Naive thymus-derived CD4-positive, alpha-beta T cell (primary cell): ENCODE measurements at regions of chr4 and their contacts with region 1.

Region 1: GRCh38 chr4:55948726-55949474 is at the start of gene CEP135:
- DNase-seq: peak; percentile 84 to 94 (median 90)
- ATAC-seq: peak; percentile 88
- H3K4me3 ChIP-seq: peak within 1 kb of the TSS; percentile 88
- H3K4me3 Mint-ChIP-seq: peak within 1 kb of the TSS; percentile 86 to 96 (median 92)
- H3K27ac ChIP-seq: peak within 1 kb of the TSS; percentile 71
- H3K27ac Mint-ChIP-seq: peak within 1 kb of the TSS; percentile 90 to 98 (median 94)
- H3K4me1 ChIP-seq: peaks cover 14 to 15% of the 10 kb centered on the region in 2 donors
- H3K4me1 Mint-ChIP-seq: peaks cover 30 to 69% (median 51%) of the 10 kb centered on the region in 7 donors
- H3K27me3 ChIP-seq: no peaks in the 10 kb centered on the region
- H3K27me3 Mint-ChIP-seq: no peaks in the 10 kb centered on the region
- total RNA-seq, gene CEP135: 20.6 to 38.8 (median 24.6) TPM

Region 2: DNA sequence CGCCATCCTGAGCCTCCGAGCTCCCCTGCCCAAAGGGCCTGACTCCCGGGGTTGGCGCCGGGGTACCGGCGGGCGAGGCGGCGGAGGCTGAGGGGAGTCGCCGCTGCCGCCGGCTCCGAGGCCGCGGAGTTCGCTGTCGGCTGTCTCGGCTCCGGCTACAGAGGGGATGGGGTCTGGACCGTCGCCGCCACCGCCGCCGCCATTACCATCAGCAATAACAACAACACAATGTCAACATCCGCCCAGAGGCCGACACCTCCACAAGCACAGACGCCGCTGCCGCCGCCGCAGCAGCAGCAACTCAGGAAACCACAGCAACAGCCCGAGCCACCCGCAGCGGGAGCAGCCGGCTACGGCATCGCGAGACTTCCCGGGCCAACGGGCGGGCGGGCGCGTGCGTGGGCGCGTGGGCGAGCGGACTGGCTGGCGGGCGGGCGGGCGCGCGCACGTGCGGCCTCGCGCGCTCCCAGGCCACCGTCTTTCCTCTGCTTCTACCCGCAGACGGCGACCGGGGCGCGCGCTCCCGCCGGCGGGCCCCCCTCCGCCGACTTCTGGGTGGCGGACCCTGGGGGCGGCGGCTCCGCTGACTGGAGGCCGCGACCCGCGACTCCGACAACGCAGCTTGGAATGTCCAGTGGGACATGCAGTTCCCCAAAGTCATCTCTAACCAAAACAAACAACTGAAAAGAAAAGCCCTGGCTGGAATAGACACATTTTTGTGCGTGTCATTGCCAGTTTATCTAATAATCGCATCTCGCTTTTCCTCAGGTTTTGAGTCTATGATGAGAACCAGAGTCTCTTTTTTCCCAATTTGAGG is 1884.4 kb before region 1 on chr4 and contains the start of gene CHIC2:
- CTCF ChIA-PET with region 1: no interaction called
- POLR2A ChIA-PET with region 1: no interaction called
- intact Hi-C with region 1: loop called (anchors 1 to 5 kb)
- DNase-seq: peak; percentile 95 to 99 (median 98)
- ATAC-seq: peak; percentile 94
- H3K4me3 ChIP-seq: peak within 1 kb of the TSS; percentile 77
- H3K4me3 Mint-ChIP-seq: peak within 1 kb of the TSS; percentile 94 to 100 (median 97)
- H3K27ac ChIP-seq: peak within 1 kb of the TSS; percentile 100
- H3K27ac Mint-ChIP-seq: peak within 1 kb of the TSS; percentile 95 to 99 (median 98)
- H3K4me1 ChIP-seq: peaks cover 8 to 32% of the 10 kb centered on the region in 2 donors
- H3K4me1 Mint-ChIP-seq: peaks cover 39 to 59% (median 44%) of the 10 kb centered on the region in 7 donors
- H3K27me3 ChIP-seq: no peaks in the 10 kb centered on the region
- H3K27me3 Mint-ChIP-seq: peaks cover 0 to 2% (median 0%) of the 10 kb centered on the region in 5 donors
- total RNA-seq, gene CHIC2: 22.4 to 55.7 (median 40.7) TPM

Region 3: DNA sequence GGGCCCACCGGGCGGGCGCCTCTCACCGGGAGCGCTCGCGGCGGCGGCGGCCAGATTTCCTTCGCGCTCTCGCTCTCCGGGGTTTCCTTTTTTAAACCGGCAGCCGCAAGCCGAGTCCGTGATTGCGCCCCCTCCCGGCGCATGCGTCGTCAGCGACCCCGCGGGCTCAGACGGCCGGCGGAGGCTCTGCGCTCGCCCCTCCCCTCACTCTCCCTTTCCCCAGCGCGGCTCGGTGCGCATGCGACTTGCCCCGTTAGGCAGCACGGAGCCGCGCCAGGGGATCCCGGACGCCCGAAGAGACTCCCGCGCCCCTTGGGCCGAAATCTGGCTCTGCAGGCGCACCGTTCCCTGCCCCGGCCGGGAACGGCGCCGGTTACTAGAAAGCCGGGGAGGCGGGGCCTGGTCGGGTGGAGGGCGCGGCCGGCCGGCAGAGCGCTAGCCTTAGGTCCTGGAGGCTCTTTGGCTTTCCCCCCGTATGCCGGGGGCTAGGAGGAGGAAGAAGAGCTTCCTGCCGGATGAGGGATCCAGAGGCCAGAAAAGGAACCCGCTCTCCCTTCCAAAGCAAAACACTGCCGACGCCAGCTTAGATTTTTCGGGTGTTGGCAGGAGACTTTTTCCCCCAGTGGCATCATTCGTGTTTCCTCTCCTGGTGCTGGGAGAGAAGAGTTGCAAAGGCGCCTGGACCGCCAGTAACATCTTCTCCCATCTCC is 402.0 kb before region 1 on chr4 and contains the start of gene CLOCK:
- CTCF ChIA-PET with region 1: interaction called, 5 read pairs
- POLR2A ChIA-PET with region 1: interaction called, 3 read pairs
- intact Hi-C with region 1: loop called (anchors 1 to 2 kb)
- DNase-seq: peak; percentile 79 to 87 (median 83)
- ATAC-seq: peak; percentile 82
- H3K4me3 ChIP-seq: peak within 1 kb of the TSS; percentile 82
- H3K4me3 Mint-ChIP-seq: peak within 1 kb of the TSS; percentile 88 to 96 (median 94)
- H3K27ac ChIP-seq: peak within 1 kb of the TSS; percentile 84
- H3K27ac Mint-ChIP-seq: peak within 1 kb of the TSS; percentile 87 to 92 (median 90)
- H3K4me1 ChIP-seq: peaks cover 5 to 8% of the 10 kb centered on the region in 2 donors
- H3K4me1 Mint-ChIP-seq: peaks cover 21 to 57% (median 40%) of the 10 kb centered on the region in 7 donors
- H3K27me3 ChIP-seq: no peaks in the 10 kb centered on the region
- H3K27me3 Mint-ChIP-seq: peaks cover 0 to 29% (median 0%) of the 10 kb centered on the region in 5 donors
- total RNA-seq, gene CLOCK: 7.9 to 12.6 (median 8.9) TPM

Region 4: GRCh38 chr4:55906999-55907398 is 41.9 kb before region 1 on chr4:
- CTCF ChIA-PET with region 1: interaction called, 4 read pairs
- POLR2A ChIA-PET with region 1: interaction called, 22 read pairs
- intact Hi-C with region 1: loop called (anchors 1 kb)
- DNase-seq: peak in 1 of 9 donors; percentile 6
- ATAC-seq: no peak
- H3K4me3 ChIP-seq: no peak overlapping the region
- H3K4me3 Mint-ChIP-seq: peak overlapping the region in 9 of 10 donors; percentile 6 to 69 (median 52)
- H3K27ac ChIP-seq: no peak overlapping the region
- H3K27ac Mint-ChIP-seq: peak overlapping the region in 8 of 9 donors; percentile 14 to 82 (median 62)
- H3K4me1 ChIP-seq: no peaks in the 10 kb centered on the region
- H3K4me1 Mint-ChIP-seq: peaks cover 11 to 31% (median 25%) of the 10 kb centered on the region in 7 donors
- H3K27me3 ChIP-seq: no peaks in the 10 kb centered on the region
- H3K27me3 Mint-ChIP-seq: no peaks in the 10 kb centered on the region

Region 5: DNA sequence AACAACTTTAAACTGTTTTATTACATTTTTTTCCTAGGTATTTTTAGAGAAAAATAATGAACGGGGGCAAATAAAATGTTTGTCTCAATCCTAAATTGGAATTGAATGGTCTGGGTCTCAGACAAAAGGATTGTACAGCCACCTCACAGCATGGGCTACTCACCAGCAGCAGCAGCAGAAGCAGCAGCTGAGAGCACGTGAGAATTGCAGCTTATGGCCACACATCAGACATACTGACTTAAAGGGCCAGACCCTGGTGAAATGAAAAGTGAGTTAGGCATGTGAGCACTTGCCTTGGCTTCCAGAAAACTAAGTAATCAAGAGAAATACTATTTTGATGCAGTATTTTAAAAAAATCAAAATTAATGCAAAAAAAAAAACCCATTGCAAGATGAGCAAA is 381.8 kb after region 1 on chr4:
- CTCF ChIA-PET with region 1: no interaction called
- POLR2A ChIA-PET with region 1: no interaction called
- intact Hi-C with region 1: no loop called
- DNase-seq: no peak
- ATAC-seq: no peak
- H3K4me3 ChIP-seq: no peak overlapping the region
- H3K4me3 Mint-ChIP-seq: no peak overlapping the region
- H3K27ac ChIP-seq: no peak overlapping the region
- H3K27ac Mint-ChIP-seq: no peak overlapping the region
- H3K4me1 ChIP-seq: no peaks in the 10 kb centered on the region
- H3K4me1 Mint-ChIP-seq: no peaks in the 10 kb centered on the region
- H3K27me3 ChIP-seq: no peaks in the 10 kb centered on the region
- H3K27me3 Mint-ChIP-seq: peaks cover 0 to 3% (median 0%) of the 10 kb centered on the region in 5 donors

Region 6: DNA sequence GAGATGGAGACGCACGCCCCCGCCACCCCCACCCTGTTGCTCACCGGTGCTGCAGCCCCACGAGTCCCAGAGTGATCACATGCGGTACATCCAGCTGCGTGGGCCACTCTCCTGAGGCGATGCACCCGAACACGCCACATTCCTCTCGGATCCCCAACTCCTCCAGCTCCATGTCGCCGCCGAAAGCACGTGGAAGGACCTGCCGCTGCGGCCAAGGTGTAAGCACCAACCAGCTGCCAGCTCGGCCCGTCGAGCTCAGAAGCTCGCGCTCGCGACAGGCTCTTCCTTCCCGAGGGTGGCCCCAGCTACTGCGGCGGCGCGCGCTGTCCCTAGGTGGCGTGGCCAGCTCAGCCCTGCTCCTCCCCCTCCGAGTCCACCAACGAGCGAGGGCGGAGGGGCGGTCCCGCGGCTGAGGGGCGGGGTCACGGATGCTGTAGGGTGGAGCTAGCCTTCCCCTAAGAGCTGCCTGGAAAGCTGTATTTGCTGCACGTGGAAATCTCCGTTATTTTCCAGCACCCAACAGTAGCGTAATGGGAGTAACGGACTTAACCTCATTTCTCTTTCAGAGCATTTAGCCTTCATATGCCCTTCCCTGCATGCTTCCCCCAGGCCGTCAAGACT is 486.5 kb after region 1 on chr4 and contains the start of gene PPAT:
- CTCF ChIA-PET with region 1: no interaction called
- POLR2A ChIA-PET with region 1: interaction called, 24 read pairs
- intact Hi-C with region 1: loop called (anchors 1 kb)
- DNase-seq: peak; percentile 97 to 100 (median 99)
- ATAC-seq: peak; percentile 91
- H3K4me3 ChIP-seq: peak within 1 kb of the TSS; percentile 93
- H3K4me3 Mint-ChIP-seq: peak within 1 kb of the TSS; percentile 81 to 99 (median 94)
- H3K27ac ChIP-seq: peak within 1 kb of the TSS; percentile 59
- H3K27ac Mint-ChIP-seq: peak within 1 kb of the TSS; percentile 78 to 98 (median 91)
- H3K4me1 ChIP-seq: peaks cover 12 to 15% of the 10 kb centered on the region in 2 donors
- H3K4me1 Mint-ChIP-seq: peaks cover 33 to 63% (median 47%) of the 10 kb centered on the region in 7 donors
- H3K27me3 ChIP-seq: no peaks in the 10 kb centered on the region
- H3K27me3 Mint-ChIP-seq: no peaks in the 10 kb centered on the region
- total RNA-seq, gene PPAT: 7.7 to 30.7 (median 15.3) TPM

Region 7: GRCh38 chr4:56799824-56800756 is 851.2 kb after region 1 on chr4:
- CTCF ChIA-PET with region 1: no interaction called
- POLR2A ChIA-PET with region 1: interaction called, 3 read pairs
- intact Hi-C with region 1: loop called in 1 of 2 experiments (anchors 1 kb)
- DNase-seq: peak; percentile 57 to 88 (median 81)
- ATAC-seq: peak; percentile 99
- H3K4me3 ChIP-seq: peak overlapping the region; percentile 56
- H3K4me3 Mint-ChIP-seq: peak overlapping the region; percentile 91 to 100 (median 94)
- H3K27ac ChIP-seq: peak overlapping the region; percentile 72
- H3K27ac Mint-ChIP-seq: peak overlapping the region; percentile 40 to 96 (median 92)
- H3K4me1 ChIP-seq: peaks cover 0 to 2% of the 10 kb centered on the region in 2 donors
- H3K4me1 Mint-ChIP-seq: peaks cover 5 to 33% (median 22%) of the 10 kb centered on the region in 7 donors
- H3K27me3 ChIP-seq: no peaks in the 10 kb centered on the region
- H3K27me3 Mint-ChIP-seq: peaks cover 0 to 28% (median 0%) of the 10 kb centered on the region in 5 donors